Activated B cell treated with CpG ODN at 0.5 μM for 24 hours (primary cell): ENCODE measurements at regions of chr1 and their contacts with region 1.

Region 1: GRCh38 chr1:214281021-214281719 is at the start of gene SMYD2:
- DNase-seq: peak; percentile 69
- ATAC-seq: peak; percentile 76
- H3K4me3 Mint-ChIP-seq: peak within 1 kb of the TSS; percentile 85
- H3K27ac Mint-ChIP-seq: peak within 1 kb of the TSS; percentile 76
- H3K4me1 Mint-ChIP-seq: peaks cover 23% of the 10 kb centered on the region
- H3K27me3 Mint-ChIP-seq: no peaks in the 10 kb centered on the region
- CTCF ChIP-seq: no peak
- total RNA-seq, gene SMYD2: 18.3 and 18.8 TPM in 2 replicates

Region 2: GRCh38 chr1:214602764-214603657 is 321.8 kb after region 1 on chr1 and contains the start of gene CENPF:
- CTCF ChIA-PET with region 1: no interaction called
- POLR2A ChIA-PET with region 1: interaction called, 12 read pairs
- intact Hi-C with region 1: loop called (anchors 2 kb)
- DNase-seq: peak; percentile 82
- ATAC-seq: peak; percentile 97
- H3K4me3 Mint-ChIP-seq: peak within 1 kb of the TSS; percentile 96
- H3K27ac Mint-ChIP-seq: peak within 1 kb of the TSS; percentile 62
- H3K4me1 Mint-ChIP-seq: peaks cover 21% of the 10 kb centered on the region
- H3K27me3 Mint-ChIP-seq: no peaks in the 10 kb centered on the region
- CTCF ChIP-seq: no peak
- total RNA-seq, gene CENPF: 4.0 and 4.1 TPM in 2 replicates

Region 3: DNA sequence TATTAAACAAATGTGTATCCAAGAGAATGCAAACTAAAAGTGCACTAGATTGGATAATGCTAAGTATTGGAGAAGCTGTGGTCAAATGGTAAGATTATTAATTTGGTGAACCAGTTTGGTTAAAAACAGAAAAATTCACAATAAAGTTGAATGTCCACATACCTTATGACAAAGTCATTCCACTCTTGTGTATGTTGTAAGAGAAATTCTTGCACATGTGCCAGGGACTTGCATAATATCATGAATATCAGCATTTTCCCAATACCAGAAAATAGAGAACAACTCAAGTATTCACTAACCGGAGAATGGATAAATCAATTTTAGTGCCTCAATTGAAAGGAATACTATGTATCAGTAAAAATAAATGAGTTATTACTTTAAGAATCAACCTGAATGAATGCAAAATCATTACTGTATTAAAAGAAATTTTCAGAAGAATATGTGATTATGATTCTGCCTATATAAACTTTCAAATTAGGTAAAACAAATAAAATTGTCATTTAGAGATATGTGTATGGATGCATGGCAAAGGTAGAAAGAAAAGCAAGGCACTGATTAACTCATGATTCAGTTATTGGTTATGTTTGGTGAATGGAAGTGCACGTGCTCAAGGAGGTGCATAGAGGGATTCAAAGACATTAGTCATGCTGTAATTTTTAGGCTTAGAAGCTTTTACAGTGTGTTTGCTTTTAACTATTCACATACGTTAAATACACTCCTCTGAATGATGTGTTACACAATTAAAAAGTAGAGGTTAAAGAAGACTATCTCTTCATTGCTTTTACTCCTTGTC is 583.9 kb after region 1 on chr1:
- CTCF ChIA-PET with region 1: no interaction called
- POLR2A ChIA-PET with region 1: no interaction called
- intact Hi-C with region 1: no loop called
- DNase-seq: no peak
- ATAC-seq: no peak
- H3K4me3 Mint-ChIP-seq: no peak overlapping the region
- H3K27ac Mint-ChIP-seq: no peak overlapping the region
- H3K4me1 Mint-ChIP-seq: no peaks in the 10 kb centered on the region
- H3K27me3 Mint-ChIP-seq: no peaks in the 10 kb centered on the region
- CTCF ChIP-seq: no peak